ENCODE measurements at regions of chr6 and their contacts with region 1.

Region 1: GRCh38 chr6:37207903-37208456 is 38.0 kb downstream of the PIM1 start:
- DNase-seq: peak; percentile 81
- CTCF ChIP-seq: peak; percentile 62

Region 2: DNA sequence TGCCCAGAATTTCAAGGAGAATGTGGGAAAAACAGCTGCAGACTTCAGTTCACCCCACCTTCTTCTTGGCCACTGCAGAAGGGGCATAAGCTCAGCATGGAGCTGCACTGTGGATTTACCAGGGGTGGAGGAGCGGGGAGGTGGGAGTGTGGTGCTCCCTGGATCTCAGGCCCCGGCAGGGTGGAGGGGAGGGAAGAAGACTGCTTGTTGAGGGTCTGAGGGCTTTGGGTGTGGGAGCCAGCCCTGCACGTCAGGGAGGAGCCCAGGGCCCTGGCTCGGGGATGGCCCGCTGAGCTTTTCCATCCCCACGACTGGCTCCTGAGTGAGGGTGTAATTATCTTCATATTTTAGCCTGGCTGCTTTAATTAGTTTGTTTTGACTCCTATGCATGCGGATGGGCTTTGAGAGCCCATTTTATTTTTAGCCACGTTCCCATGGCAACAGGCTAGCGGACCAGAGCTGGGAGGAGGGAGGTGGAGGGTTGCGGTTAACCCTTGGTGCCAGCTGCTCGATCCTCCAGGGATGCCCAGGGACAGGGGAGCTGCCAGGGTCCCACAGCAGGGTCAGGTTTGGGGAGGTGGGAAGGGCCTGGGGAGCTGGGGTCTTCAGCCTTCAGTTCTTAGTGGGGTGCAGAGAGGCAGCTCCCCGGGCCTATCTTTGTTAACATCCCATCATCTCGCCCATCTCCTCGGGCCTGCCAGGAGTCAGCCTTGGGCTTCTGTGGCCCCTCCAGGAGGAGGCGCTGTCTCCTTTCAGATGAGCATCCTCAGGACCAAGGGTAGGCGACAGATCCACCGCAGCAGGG is 442.2 kb before region 1 on chr6:
- CTCF ChIA-PET with region 1: interaction called, 30 read pairs
- POLR2A ChIA-PET with region 1: no interaction called
- DNase-seq: peak; percentile 90
- CTCF ChIP-seq: peak; percentile 98

Region 3: DNA sequence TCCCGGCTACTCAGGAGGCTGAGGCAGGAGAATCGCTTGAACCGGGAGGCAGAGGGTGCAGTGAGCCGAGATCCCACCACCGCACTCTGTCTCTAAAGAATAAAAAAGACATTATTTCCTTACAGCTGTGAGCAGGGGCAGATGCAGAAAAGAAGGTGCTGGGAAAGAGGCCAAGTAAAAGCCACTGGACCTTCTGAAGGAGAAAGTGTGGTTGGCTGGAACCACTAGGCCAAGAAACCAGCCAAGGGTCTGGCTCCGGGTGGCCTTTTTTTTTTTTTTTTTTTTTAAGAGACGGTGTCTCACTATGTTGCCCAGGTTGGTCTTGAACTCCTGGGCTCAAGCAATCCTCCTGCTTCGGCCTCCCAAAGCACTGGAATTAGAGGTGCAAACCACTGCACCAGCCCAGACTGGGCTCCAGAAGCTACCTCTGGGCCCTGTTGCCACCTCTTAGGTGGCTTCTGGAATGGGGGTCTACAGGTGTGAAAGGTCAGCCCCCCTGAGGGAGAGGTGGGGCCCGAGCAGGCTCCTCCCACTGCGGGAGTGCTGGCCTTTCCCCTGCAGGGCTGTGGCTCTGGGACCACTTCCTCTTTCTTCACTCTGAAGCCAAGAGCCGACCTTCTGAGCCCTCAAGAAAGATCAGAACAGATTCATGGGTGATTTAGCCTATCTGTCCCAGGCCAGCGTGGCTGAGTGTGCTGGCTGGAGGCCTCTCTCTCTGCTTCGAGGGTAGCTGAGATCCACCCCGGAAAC is 202.7 kb before region 1 on chr6 and contains the start of gene FGD2:
- CTCF ChIA-PET with region 1: interaction called, 26 read pairs
- POLR2A ChIA-PET with region 1: no interaction called
- DNase-seq: peak; percentile 92
- CTCF ChIP-seq: no peak

Region 4: DNA sequence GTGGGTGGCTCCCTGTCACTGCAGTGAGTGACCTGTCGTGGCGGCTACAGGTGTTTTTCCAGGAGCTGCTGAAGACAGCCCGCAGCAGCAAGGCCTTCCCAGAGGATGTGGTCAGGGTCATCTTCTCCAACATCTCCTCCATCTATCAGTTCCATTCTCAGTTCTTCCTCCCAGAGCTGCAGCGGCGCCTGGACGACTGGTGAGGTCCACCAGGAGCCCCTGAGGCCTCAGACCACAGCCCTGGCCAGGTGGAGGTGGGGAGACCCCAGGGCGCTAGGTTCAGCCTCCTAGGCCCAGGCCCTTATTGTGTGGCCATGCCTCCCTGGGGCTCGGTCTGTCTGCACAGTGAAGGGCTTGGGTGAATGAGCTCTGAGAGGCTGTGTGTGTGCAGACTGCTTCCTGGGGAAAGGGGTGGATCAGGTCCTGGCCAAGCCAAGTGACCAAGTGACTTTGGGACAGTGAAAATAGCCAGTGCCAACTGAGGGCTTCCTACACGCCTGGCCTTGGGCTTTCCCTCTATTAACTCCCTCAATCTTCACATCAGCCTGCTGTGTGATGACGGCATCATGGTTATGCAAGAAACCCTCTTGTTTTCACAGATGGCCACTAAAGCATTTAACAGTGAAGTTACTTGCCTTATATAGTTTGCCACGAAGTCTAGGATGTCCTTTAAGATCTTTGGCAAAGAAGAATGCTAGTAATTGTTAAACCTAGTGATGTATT is 196.2 kb before region 1 on chr6:
- CTCF ChIA-PET with region 1: interaction called, 774 read pairs
- POLR2A ChIA-PET with region 1: no interaction called
- DNase-seq: no peak
- CTCF ChIP-seq: no peak

Region 5: GRCh38 chr6:37190159-37190535 is 17.8 kb before region 1 on chr6:
- CTCF ChIA-PET with region 1: interaction called, 38 read pairs
- POLR2A ChIA-PET with region 1: no interaction called
- DNase-seq: no peak
- CTCF ChIP-seq: no peak

Region 6: DNA sequence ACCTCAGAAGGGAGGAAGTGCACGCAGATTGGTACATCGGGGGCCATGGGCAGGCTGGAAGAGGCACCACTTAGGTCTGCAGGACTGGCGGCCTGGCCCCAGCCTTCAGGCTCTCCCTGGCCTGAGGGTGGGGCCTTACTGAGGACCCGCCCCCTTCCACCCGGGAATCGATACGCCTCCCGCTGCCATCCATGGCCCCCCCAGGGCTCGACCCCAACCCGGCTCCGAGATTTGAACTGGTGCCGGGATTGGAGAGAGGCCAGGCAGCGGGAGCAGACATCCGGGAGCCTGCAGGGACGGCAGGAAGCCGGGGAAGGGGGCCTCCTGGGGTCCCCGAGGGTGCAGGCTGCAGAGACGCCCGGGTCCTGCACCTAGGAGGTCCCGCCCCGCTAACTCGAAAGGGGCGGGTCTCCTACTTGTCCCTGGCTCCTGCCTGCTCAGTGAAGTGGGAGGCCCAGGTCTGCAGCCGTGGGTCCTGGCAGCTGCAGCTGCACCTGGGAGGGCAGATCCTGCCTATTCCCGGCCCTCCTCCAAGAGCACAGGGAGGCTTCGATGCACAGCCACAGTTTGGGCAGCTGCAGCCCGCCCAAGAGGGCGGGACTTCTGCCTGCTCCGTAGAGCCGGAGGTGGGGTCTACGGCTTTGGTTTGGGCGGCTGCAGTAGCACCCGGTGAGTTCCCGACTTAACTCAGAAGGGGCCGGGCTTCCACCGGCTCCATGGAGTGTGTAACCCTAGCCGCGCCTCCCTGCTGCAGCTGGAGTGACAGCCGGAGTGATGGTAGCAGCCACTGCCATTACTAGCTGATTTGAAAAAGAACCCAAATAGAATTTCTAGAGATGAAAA is 14.4 kb after region 1 on chr6:
- CTCF ChIA-PET with region 1: interaction called, 75 read pairs
- POLR2A ChIA-PET with region 1: no interaction called
- DNase-seq: peak; percentile 89
- CTCF ChIP-seq: no peak

Region 7: GRCh38 chr6:37272834-37273566 is 65.0 kb after region 1 on chr6:
- CTCF ChIA-PET with region 1: no interaction called
- POLR2A ChIA-PET with region 1: no interaction called
- DNase-seq: no peak
- CTCF ChIP-seq: no peak